Colonic mucosa (tissue), 4 donors: ENCODE measurements at regions of chr13 and their contacts with region 1.

Region 1: DNA sequence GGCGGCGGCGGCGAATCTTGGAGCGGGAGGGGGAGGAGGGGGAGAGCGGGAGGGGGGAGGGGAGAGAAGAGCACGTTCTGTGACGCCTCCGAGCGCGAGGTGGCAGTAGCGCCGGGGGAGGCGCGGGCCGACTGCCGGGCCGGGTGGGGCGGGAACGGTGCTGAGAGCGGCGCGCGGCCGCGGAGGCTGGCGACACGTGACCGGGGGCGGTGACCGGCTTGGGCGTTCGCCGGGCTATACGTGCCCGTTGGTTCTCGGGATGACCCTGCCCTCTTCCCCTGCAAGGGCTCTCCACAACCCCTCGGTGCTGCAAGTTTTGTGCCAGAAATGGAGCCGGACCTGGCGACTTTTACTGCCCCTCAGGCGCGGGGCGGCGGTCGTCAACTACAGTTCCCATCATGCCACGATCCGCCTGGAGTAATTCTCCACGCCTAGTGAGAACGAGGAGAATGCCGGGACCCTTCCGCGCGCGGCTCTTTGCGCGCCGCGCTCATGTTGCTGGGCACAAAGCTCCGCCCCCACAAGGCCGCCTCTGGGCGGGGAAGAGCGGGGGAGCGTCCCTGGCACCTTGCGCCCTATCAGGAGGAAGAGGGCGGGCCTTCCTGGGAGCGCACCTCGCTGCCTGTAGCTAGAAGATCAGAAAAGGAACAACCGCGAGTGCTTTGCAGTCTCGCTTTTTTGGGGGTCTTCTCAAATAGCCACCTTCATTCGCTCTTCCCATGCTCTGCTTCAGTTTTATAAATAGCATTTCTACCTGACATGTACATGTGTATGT is at the start of gene KPNA3:
- DNase-seq: peak; percentile 96
- H3K4me3 ChIP-seq: peak within 1 kb of the TSS; percentile 87
- H3K27ac ChIP-seq: peak within 1 kb of the TSS; percentile 92
- H3K4me1 ChIP-seq: no peaks in the 10 kb centered on the region
- H3K27me3 ChIP-seq: no peaks in the 10 kb centered on the region
- CTCF ChIP-seq: no peak
- total RNA-seq, gene KPNA3: 28.9 to 31.3 TPM

Region 2: DNA sequence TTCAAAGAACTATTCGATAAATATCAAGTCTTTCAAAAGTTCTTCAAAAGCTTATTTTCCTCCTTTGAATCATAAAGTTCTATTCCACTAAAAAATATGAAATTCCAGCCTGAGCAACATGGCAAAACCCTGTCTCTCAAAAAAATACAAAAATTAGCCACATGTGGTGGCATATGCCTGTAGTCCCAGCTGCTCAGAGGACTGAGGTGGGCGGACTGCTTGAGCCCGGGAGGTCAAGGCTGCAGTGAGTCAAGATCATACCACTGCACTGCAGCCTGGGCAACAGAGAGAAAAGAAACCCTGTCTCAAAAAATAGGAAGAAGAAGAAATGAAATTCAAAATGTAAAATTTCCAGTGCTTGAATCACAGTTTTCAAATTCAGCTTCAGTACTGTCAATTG is 373.5 kb before region 1 on chr13:
- intact Hi-C with region 1: no loop called
- DNase-seq: no peak
- H3K4me3 ChIP-seq: no peak overlapping the region
- H3K27ac ChIP-seq: no peak overlapping the region
- H3K4me1 ChIP-seq: no peaks in the 10 kb centered on the region
- H3K27me3 ChIP-seq: no peaks in the 10 kb centered on the region
- CTCF ChIP-seq: no peak

Region 3: GRCh38 chr13:49687782-49688181 is 105.0 kb before region 1 on chr13:
- intact Hi-C with region 1: loop called (anchors 5 kb)
- DNase-seq: no peak
- H3K4me3 ChIP-seq: no peak overlapping the region
- H3K27ac ChIP-seq: no peak overlapping the region
- H3K4me1 ChIP-seq: no peaks in the 10 kb centered on the region
- H3K27me3 ChIP-seq: no peaks in the 10 kb centered on the region
- CTCF ChIP-seq: no peak

Region 4: GRCh38 chr13:49836516-49836915 is 43.8 kb after region 1 on chr13:
- intact Hi-C with region 1: no loop called
- DNase-seq: no peak
- H3K4me3 ChIP-seq: no peak overlapping the region
- H3K27ac ChIP-seq: no peak overlapping the region
- H3K4me1 ChIP-seq: no peaks in the 10 kb centered on the region
- H3K27me3 ChIP-seq: no peaks in the 10 kb centered on the region
- CTCF ChIP-seq: no peak